Sigmoid colon (tissue), 7 donors: ENCODE measurements at regions of chr1 and their contacts with region 1.

Region 1: DNA sequence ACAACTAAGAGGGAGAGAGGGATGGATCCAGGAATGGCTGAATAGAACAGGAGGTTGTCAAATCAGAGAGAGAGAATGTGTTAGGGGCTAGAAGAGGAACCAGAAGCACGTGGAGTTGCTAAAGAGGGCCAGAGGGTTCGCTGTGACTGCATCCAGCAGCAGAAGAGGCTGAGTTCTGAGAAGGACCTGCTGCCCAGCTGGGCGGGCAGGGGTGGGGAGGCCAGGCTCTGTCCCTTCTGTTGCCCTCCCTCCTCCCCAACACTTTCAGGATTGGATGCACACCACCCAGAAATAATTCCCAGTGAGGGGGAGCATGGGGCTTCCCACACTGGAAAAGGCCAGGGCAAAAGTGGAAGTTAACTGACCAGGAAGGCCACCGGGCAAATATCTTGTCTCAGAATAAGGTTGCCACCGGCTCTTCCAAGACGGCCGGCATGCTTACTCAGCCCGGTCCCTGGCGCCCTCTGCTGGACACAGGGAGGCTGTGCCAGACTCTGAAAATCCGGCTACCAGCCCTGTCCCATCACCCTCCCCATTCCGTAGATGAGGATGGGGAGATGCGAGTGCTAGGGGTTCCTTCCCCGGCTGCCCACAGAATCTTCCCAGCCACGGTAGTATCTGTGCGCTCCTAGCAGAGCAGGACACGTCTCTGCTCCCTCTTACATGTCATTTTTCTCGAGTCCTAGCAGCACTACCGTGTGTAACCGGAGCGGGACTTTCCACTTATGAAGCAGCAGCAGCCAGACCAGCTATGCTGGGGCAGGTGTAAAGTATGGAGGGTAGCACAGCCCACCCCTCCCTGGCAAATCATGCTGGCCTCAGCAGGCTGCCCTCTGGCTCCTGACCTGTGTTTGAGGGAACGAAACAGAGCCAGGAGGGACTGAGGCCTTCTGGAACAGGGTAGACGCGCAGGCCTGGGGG is 46.8 kb upstream of the A3GALT2 start:
- DNase-seq: peak; percentile 94
- H3K4me3 ChIP-seq: no peak overlapping the region
- H3K27ac ChIP-seq: peak overlapping the region; percentile 59 to 84 (median 75)
- H3K4me1 ChIP-seq: peaks cover 0 to 65% (median 57%) of the 10 kb centered on the region in 4 donors
- H3K27me3 ChIP-seq: no peaks in the 10 kb centered on the region
- CTCF ChIP-seq: peak; percentile 93 to 97 (median 95)
- EP300 ChIP-seq: no peak
- POLR2A ChIP-seq: no peak

Region 2: GRCh38 chr1:32394141-32394889 is 973.4 kb before region 1 on chr1 and contains the start of gene BSDC1:
- intact Hi-C with region 1: no loop called
- DNase-seq: peak; percentile 99
- H3K4me3 ChIP-seq: peak within 1 kb of the TSS; percentile 81 to 94 (median 88)
- H3K27ac ChIP-seq: peak within 1 kb of the TSS; percentile 92 to 95 (median 94)
- H3K4me1 ChIP-seq: peaks cover 0 to 42% (median 28%) of the 10 kb centered on the region in 4 donors
- H3K27me3 ChIP-seq: no peaks in the 10 kb centered on the region
- CTCF ChIP-seq: no peak
- EP300 ChIP-seq: no peak
- POLR2A ChIP-seq: peak; percentile 88 to 89
- total RNA-seq, gene BSDC1: 52.8 to 76.7 (median 62.1) TPM

Region 3: GRCh38 chr1:32972814-32973428 is 394.8 kb before region 1 on chr1:
- intact Hi-C with region 1: no loop called
- DNase-seq: peak; percentile 77
- H3K4me3 ChIP-seq: peak overlapping the region; percentile 34 to 64 (median 54)
- H3K27ac ChIP-seq: peak overlapping the region; percentile 11 to 63 (median 38)
- H3K4me1 ChIP-seq: peaks cover 0 to 11% (median 6%) of the 10 kb centered on the region in 4 donors
- H3K27me3 ChIP-seq: no peaks in the 10 kb centered on the region
- CTCF ChIP-seq: no peak
- EP300 ChIP-seq: no peak
- POLR2A ChIP-seq: no peak

Region 4: GRCh38 chr1:33127001-33127791 is 240.5 kb before region 1 on chr1:
- intact Hi-C with region 1: loop called (anchors 5 kb)
- DNase-seq: peak; percentile 99
- H3K4me3 ChIP-seq: peak overlapping the region; percentile 46 to 58 (median 55)
- H3K27ac ChIP-seq: peak overlapping the region; percentile 75 to 87 (median 82)
- H3K4me1 ChIP-seq: peaks cover 0 to 15% (median 12%) of the 10 kb centered on the region in 4 donors
- H3K27me3 ChIP-seq: no peaks in the 10 kb centered on the region
- CTCF ChIP-seq: peak; percentile 45 to 86 (median 80)
- EP300 ChIP-seq: peak in 1 of 4 donors; percentile 76
- POLR2A ChIP-seq: peak in 1 of 2 donors; percentile 18

Region 5: GRCh38 chr1:33219881-33220661 is 147.7 kb before region 1 on chr1:
- intact Hi-C with region 1: loop called (anchors 5 kb)
- DNase-seq: no peak
- H3K4me3 ChIP-seq: no peak overlapping the region
- H3K27ac ChIP-seq: no peak overlapping the region
- H3K4me1 ChIP-seq: no peaks in the 10 kb centered on the region
- H3K27me3 ChIP-seq: no peaks in the 10 kb centered on the region
- CTCF ChIP-seq: no peak
- EP300 ChIP-seq: no peak
- POLR2A ChIP-seq: no peak

Region 6: DNA sequence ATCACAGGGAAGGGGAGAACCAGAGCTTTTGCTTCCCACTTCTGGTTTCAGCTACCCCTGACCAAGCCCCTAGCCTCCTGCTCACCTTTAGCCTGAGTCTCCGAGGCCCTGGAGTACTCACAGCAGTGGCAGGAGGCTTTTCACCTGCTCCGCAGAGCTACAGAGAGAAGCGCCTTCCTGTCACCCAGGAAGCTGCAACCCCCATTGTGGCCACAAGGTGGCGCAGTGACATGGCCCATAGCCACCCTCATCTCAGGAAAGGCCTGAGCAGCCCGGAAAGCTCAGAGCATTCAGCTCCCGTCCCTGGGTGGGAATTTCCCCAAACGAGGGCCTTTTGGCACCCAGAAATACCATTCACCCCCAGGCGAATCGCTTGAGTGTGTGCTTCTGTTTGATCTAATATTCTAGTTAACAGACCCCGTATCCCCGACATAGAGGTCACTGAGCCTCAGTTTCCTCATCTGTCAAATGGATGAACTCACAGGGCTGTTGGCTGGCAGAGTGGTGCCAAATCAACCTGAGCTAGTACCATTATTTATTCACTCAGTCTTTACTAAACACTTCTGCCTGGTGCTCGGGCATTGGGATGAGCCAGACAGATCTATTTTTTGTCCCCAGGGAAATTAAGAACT is 72.2 kb before region 1 on chr1:
- intact Hi-C with region 1: loop called (anchors 1 kb)
- DNase-seq: peak; percentile 92
- H3K4me3 ChIP-seq: no peak overlapping the region
- H3K27ac ChIP-seq: peak overlapping the region; percentile 41 to 53 (median 48)
- H3K4me1 ChIP-seq: peaks cover 0 to 31% (median 20%) of the 10 kb centered on the region in 4 donors
- H3K27me3 ChIP-seq: no peaks in the 10 kb centered on the region
- CTCF ChIP-seq: peak; percentile 95 to 99 (median 98)
- EP300 ChIP-seq: no peak
- POLR2A ChIP-seq: no peak

Region 7: GRCh38 chr1:33455539-33456501 is 88.1 kb after region 1 on chr1:
- intact Hi-C with region 1: loop called (anchors 5 kb)
- DNase-seq: no peak
- H3K4me3 ChIP-seq: no peak overlapping the region
- H3K27ac ChIP-seq: peak overlapping the region in 3 of 4 donors; percentile 71 to 91 (median 81)
- H3K4me1 ChIP-seq: peaks cover 2 to 58% (median 48%) of the 10 kb centered on the region in 4 donors
- H3K27me3 ChIP-seq: no peaks in the 10 kb centered on the region
- CTCF ChIP-seq: peak; percentile 36 to 55 (median 54)
- EP300 ChIP-seq: no peak
- POLR2A ChIP-seq: no peak

Region 8: DNA sequence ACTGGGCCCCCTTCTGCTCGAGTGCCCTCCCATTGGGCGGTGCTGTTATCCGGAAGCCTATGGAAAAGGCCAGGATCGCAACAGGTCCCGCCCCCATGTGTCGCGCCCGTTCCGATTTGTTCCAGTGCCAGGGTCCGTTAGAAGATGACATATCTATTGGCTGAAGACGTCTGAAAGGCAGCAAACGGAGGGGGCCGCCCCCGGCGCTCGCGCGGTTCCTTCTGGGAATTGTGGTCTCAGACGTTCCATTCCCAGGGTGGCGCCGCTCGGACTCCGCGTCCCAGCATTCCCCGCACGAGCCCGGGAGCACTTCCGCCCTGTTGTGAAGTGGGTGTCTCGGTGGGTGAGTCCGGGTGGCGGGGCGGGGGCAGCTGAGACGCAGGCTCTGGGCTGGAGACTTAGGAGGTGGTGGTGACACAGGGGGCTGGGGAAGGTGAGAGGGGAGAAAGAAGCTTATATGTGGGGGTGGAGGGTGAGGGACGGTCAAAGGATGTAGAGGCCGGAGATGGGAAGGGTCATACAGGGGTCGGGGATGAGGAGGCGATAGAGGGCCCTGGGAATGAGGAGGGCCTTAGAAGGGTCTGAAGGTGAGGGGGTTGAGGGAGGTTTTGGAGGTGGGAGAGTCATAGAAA is 104.7 kb after region 1 on chr1 and contains the start of gene ZSCAN20:
- intact Hi-C with region 1: loop called (anchors 2 kb)
- DNase-seq: peak; percentile 99
- H3K4me3 ChIP-seq: peak within 1 kb of the TSS; percentile 52 to 67 (median 66)
- H3K27ac ChIP-seq: peak within 1 kb of the TSS; percentile 77 to 83 (median 82)
- H3K4me1 ChIP-seq: peaks cover 0 to 56% (median 37%) of the 10 kb centered on the region in 4 donors
- H3K27me3 ChIP-seq: no peaks in the 10 kb centered on the region
- CTCF ChIP-seq: no peak
- EP300 ChIP-seq: peak in 1 of 4 donors; percentile 69
- POLR2A ChIP-seq: no peak
- total RNA-seq, gene ZSCAN20: 5.8 to 8.2 (median 6.8) TPM

Region 9: GRCh38 chr1:33918368-33918767 is 550.6 kb after region 1 on chr1:
- intact Hi-C with region 1: no loop called
- DNase-seq: no peak
- H3K4me3 ChIP-seq: no peak overlapping the region
- H3K27ac ChIP-seq: no peak overlapping the region
- H3K4me1 ChIP-seq: no peaks in the 10 kb centered on the region
- H3K27me3 ChIP-seq: no peaks in the 10 kb centered on the region
- CTCF ChIP-seq: no peak
- EP300 ChIP-seq: no peak
- POLR2A ChIP-seq: no peak